HepG2 (cell line): ENCODE measurements at regions of chr21 and their contacts with region 1.

Region 1: GRCh38 chr21:33542640-33543504 is at the start of gene SON:
- DNase-seq: peak; percentile 96
- ATAC-seq: peak; percentile 97
- H3K4me3 ChIP-seq: peak within 1 kb of the TSS; percentile 85 to 98 (median 91)
- H3K27ac ChIP-seq: peak within 1 kb of the TSS; percentile 100
- H3K4me1 ChIP-seq: peaks cover 26% of the 10 kb centered on the region
- H3K27me3 ChIP-seq: no peaks in the 10 kb centered on the region; a peak in 1 of 5 replicates
- CTCF ChIP-seq: no peak
- EP300 ChIP-seq: no peak
- POLR2A ChIP-seq: peak; percentile 88 to 97
- RAD21 ChIP-seq: no peak
- total RNA-seq, gene SON: 78.3 and 291 TPM in 2 replicates

Region 2: DNA sequence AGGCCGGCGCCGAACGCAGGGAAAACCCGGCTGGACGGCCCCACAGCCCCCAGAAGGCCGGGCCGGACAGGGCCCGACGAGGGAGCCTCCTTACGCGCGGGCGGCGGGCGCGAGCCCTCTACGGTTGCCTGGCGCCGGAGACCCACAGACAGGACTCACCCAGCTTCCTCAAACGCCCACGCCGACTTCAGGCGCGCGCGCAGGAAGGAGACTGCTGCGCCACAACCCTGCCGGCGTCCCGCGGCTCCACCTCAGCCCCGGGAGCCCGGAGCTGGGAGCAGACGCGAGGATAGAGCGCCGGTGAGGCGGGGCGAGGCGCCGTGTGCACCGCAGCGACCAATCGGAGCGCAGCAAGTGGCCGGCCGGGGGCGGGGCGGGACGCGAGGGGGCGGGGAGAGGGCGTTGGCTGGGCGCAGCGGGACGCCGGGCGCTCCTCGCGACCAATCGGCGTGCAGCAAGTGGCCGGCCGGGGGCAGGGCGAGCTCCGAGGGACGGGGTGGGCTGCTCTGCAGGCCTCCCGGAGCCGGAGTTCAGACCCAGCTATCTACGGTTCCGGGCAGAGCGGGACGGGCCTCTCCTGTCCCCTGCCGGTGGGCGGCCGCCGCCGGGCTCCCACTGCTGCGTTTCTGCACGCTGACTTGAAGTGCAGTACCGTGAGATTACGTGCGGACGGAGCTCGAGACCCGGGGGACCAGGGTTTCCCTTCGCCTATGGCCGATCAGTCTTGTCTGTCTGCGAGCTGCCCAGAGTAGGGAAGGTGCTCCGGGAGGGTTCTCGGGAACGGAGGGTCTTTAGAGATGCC is 63.0 kb before region 1 on chr21 and contains the start of gene TMEM50B:
- CTCF ChIA-PET with region 1: no interaction called
- POLR2A ChIA-PET with region 1: interaction called, 13 read pairs
- in situ Hi-C with region 1: no loop called
- intact Hi-C with region 1: no loop called
- DNase-seq: peak; percentile 90
- ATAC-seq: peak; percentile 95
- H3K4me3 ChIP-seq: peak within 1 kb of the TSS; percentile 72 to 91 (median 85)
- H3K27ac ChIP-seq: peak within 1 kb of the TSS; percentile 92
- H3K4me1 ChIP-seq: peaks cover 23% of the 10 kb centered on the region
- H3K27me3 ChIP-seq: no peaks in the 10 kb centered on the region; a peak in 1 of 5 replicates
- CTCF ChIP-seq: peak; percentile 78
- EP300 ChIP-seq: 0 out of 4 replicates have a peak, but pooled peaks of 1 of the 2 experiments have one; percentile 14
- POLR2A ChIP-seq: peak; percentile 89 to 90
- RAD21 ChIP-seq: peak; percentile 83
- total RNA-seq, gene TMEM50B: 13.9 and 29.9 TPM in 2 replicates

Region 3: DNA sequence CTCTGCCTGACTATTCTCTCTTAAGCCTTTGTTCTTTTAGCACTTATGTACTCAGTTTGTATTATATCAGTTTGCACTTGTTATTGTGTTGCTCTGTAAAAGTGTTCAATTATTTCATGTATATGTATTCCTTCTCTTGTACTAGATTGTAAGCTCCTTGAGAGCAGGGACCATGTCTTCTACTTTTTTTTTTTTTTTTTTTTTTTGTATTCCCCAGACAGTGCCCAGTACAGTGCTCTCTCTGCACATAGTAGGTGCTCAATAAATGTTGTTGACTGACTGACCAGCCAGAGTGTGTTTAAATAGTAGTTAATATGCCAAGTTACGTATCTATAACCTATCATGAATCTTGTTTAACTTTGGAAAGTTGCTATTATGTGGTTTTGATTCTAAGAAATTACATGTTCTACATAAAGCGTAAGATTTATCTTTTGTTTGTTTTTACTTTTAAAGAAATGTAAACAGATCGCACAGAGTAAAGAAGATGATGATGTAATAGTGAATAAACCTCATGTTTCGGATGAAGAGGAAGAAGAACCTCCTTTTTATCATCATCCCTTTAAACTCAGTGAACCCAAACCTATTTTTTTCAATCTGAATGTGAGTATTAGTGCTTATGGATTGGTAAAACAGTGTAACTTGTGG is 16.0 kb after region 1 on chr21:
- CTCF ChIA-PET with region 1: no interaction called
- POLR2A ChIA-PET with region 1: interaction called, 5 read pairs
- in situ Hi-C with region 1: no loop called
- intact Hi-C with region 1: loop called (anchors 2 kb)
- DNase-seq: no peak
- ATAC-seq: no peak
- H3K4me3 ChIP-seq: no peak overlapping the region
- H3K27ac ChIP-seq: no peak overlapping the region
- H3K4me1 ChIP-seq: peaks cover 11% of the 10 kb centered on the region; the same call in 1 of the 2 replicates
- H3K27me3 ChIP-seq: no peaks in the 10 kb centered on the region; a peak in 1 of 5 replicates
- CTCF ChIP-seq: no peak
- EP300 ChIP-seq: no peak
- POLR2A ChIP-seq: no peak
- RAD21 ChIP-seq: no peak

Region 4: DNA sequence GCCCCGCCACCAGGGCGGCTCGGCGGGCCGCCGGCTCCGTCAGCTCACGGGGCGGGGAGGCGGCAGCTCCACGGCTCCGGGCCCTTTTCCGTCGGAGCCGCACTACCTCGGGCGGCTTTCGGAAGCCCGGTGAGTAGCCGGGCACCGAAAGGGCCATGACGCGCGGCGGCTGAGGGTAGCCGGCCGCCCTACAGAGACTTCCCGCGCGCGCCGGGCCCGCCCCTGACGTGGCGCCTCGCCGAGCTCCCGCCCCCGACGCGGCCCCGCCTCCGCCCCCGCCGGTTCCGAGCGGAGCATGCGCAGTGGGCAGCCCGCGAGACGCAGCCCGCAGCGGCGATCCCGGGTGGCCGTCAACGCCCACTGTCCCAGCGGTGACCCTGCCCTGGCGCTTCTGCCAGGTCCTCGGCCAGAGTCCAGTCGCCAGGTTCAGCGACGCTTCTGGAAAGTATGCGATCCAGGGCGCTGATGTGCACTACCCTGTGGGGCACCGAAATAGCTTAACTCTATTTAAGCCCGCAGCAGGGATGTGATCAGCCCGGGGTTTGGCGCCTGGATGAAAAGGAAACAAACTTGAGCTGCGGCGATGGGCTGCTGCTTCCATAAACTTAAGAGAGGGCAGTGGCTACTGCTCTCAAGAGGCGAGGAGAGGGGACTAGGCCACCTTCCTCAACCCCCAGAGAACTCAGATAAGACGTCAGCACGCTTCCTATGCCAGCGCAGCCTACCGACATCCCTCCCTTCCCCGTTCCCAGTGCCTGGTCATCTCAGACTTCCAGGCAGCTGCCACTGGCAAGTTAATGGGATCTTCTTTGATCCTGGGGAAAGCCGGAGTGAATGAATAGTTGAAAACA is 45.8 kb after region 1 on chr21 and contains the start of gene DONSON:
- CTCF ChIA-PET with region 1: no interaction called
- POLR2A ChIA-PET with region 1: interaction called, 19 read pairs
- in situ Hi-C with region 1: no loop called
- intact Hi-C with region 1: loop called (anchors 5 kb)
- DNase-seq: peak; percentile 89
- ATAC-seq: peak; percentile 97
- H3K4me3 ChIP-seq: peak within 1 kb of the TSS; percentile 96 to 97 (median 97)
- H3K27ac ChIP-seq: peak within 1 kb of the TSS; percentile 89
- H3K4me1 ChIP-seq: peaks cover 35% of the 10 kb centered on the region
- H3K27me3 ChIP-seq: no peaks in the 10 kb centered on the region; a peak in 1 of 5 replicates
- CTCF ChIP-seq: no peak
- EP300 ChIP-seq: 0 out of 4 replicates have a peak, but pooled peaks of 1 of the 2 experiments have one; percentile 30
- POLR2A ChIP-seq: peak; percentile 70 to 82
- RAD21 ChIP-seq: peak; percentile 47; the same call in 1 of the 2 replicates
- total RNA-seq, gene DONSON: 60.8 and 63.6 TPM in 2 replicates

Region 5: DNA sequence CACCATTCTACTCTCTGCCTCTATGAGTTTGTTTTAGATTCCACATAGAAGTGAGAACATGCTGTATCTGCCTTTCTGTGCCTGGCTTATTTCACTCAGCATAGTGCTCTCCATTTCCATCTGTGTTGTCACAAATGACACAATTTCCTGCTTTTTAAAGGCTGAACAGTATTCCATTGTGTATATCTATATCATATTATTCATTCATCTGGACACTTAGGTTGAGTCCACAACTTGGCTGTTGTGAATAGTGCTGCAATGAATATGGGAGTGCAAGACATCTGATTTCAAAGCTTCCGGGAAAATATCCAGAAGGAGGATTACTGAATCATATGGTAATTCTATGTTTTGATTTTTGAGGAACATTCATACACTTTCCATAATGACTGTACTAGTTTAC is 65.7 kb after region 1 on chr21:
- CTCF ChIA-PET with region 1: no interaction called
- POLR2A ChIA-PET with region 1: interaction called, 5 read pairs
- in situ Hi-C with region 1: no loop called
- intact Hi-C with region 1: loop called (anchors 5 kb)
- DNase-seq: no peak
- ATAC-seq: no peak
- H3K4me3 ChIP-seq: no peak overlapping the region
- H3K27ac ChIP-seq: no peak overlapping the region
- H3K4me1 ChIP-seq: no peaks in the 10 kb centered on the region
- H3K27me3 ChIP-seq: no peaks in the 10 kb centered on the region
- CTCF ChIP-seq: no peak
- EP300 ChIP-seq: no peak
- POLR2A ChIP-seq: no peak
- RAD21 ChIP-seq: no peak

Region 6: DNA sequence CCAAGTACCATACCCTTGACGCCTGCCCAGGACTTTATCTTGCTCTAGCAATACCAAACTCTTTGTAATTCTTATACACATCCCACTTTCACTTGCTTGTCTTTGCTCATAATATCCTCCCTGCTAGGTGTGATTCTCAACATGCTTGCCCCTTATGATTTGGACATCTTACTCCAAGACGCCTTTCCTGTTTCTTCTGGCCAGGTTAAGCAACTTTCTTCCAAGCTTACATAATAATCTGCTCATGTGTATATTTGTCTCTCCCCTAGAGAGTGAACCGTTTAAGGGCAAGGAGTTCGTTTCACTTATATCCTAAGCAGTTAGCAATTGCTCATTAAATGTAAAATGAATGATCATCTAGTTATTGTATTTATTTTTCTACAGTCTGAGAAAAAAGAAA is 76.9 kb after region 1 on chr21:
- CTCF ChIA-PET with region 1: no interaction called
- POLR2A ChIA-PET with region 1: no interaction called
- in situ Hi-C with region 1: no loop called
- intact Hi-C with region 1: no loop called
- DNase-seq: no peak
- ATAC-seq: no peak
- H3K4me3 ChIP-seq: no peak overlapping the region
- H3K27ac ChIP-seq: no peak overlapping the region
- H3K4me1 ChIP-seq: no peaks in the 10 kb centered on the region
- H3K27me3 ChIP-seq: no peaks in the 10 kb centered on the region
- CTCF ChIP-seq: no peak
- EP300 ChIP-seq: no peak
- POLR2A ChIP-seq: no peak
- RAD21 ChIP-seq: no peak